Adrenal gland (tissue), 19 donors: ENCODE measurements at regions of chr10 and their contacts with region 1.

Region 1: DNA sequence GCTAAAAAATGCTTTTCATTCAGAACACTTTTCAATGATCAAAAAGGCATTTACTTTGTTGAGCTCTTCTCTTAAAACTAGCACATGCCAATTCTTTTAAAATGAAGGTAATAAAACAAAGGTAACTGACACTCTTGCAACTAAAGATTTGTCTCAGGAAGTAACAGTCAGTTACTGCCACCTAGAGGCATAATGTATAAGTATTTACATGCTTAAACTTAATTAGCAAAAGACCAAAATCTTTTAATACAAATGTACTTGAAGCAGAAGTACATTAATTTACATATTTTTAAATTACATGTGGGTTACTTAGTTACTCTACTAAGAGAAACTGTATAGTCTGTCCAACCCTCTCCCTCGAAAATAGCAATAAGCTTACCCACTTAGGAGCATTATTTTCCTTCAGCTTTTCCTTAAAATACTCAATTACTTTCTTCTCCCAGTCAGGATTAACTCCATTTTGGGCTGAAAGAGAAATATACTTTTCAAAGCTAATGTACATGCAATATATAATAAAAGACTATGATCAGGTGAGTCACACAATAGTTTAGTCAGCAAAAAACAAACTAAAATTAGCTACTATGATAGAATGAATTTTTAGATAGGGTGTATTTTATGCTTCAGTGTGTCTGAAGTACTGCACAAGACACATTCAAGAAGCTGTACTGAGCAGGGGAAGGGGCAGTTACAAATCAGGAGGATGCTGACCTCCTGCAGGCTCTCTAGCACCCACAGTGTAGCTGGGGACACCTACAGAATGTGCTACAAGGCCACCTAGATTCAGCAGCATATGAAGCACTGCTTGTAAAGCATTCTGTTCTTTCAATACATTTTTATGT is 13.0 kb downstream of the MCMBP start:
- DNase-seq: no peak
- H3K4me3 ChIP-seq: no peak overlapping the region
- H3K27ac ChIP-seq: no peak overlapping the region
- H3K4me1 ChIP-seq: no peaks in the 10 kb centered on the region
- H3K27me3 ChIP-seq: no peaks in the 10 kb centered on the region
- CTCF ChIP-seq: peak; percentile 29 to 73 (median 55)
- POLR2A ChIP-seq: no peak

Region 2: DNA sequence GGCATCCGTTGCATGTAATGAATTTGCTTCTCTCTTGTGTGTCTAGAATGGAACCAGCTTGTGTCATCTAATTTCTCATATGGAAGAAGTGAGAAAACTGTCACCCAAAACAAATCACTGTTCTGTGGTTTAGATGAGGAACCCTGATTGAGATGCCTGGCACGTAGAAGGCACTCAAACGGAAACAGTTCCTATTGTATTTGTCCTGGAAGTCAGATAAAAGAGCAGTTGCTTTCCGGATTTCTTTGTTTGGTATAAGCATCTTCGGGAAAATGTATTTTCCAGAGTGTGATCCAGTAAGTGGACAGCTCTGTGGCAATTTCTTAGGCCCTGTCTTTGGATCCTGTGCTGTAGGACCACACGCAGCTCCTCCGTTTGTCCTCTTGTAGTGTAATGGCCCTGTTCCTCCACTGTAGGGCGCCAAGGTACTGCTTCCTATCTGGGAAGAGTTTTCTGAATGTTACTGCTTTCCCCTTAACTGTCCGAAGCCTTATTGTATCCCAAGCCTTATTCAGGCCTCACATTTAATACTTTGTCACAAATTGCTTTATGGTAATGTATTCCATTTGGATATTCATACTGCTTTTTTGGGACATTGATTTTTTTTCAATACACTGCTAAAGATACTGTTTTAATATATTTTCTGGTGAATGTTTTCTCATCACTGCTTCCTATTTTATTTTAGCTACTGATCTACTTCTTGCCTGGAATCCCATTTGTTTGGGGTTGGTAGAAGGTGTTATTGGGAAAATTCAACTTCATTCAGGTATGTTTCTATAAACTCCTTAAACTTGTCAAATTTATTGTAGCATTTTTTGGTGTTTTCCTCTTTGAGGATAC is 109.0 kb before region 1 on chr10:
- intact Hi-C with region 1: loop called (anchors 5 to 10 kb)
- DNase-seq: peak; percentile 66 to 91 (median 77)
- H3K4me3 ChIP-seq: no peak overlapping the region
- H3K27ac ChIP-seq: no peak overlapping the region
- H3K4me1 ChIP-seq: no peaks in the 10 kb centered on the region
- H3K27me3 ChIP-seq: no peaks in the 10 kb centered on the region
- CTCF ChIP-seq: peak; percentile 77 to 94 (median 92)
- POLR2A ChIP-seq: no peak

Region 3: GRCh38 chr10:119826771-119827170 is 32.9 kb before region 1 on chr10:
- intact Hi-C with region 1: no loop called
- DNase-seq: no peak
- H3K4me3 ChIP-seq: no peak overlapping the region
- H3K27ac ChIP-seq: no peak overlapping the region
- H3K4me1 ChIP-seq: no peaks in the 10 kb centered on the region
- H3K27me3 ChIP-seq: no peaks in the 10 kb centered on the region
- CTCF ChIP-seq: no peak
- POLR2A ChIP-seq: no peak

Region 4: GRCh38 chr10:120161111-120161510 is 301.5 kb after region 1 on chr10:
- intact Hi-C with region 1: no loop called
- DNase-seq: peak in 6 of 7 donors; percentile 21 to 71 (median 40)
- H3K4me3 ChIP-seq: no peak overlapping the region
- H3K27ac ChIP-seq: no peak overlapping the region
- H3K4me1 ChIP-seq: no peaks in the 10 kb centered on the region
- H3K27me3 ChIP-seq: peaks cover 5% of the 10 kb centered on the region
- CTCF ChIP-seq: no peak
- POLR2A ChIP-seq: no peak